ENCODE measurements at regions of chr10 and their contacts with region 1.

Region 1: GRCh38 chr10:71187600-71187999 is 24.8 kb upstream of the UNC5B start:
- DNase-seq: no peak

Region 2: GRCh38 chr10:70920565-70920964 is 267.0 kb before region 1 on chr10:
- intact Hi-C with region 1: loop called (anchors 5 kb)
- DNase-seq: no peak

Region 3: GRCh38 chr10:71128311-71128980 is 59.2 kb before region 1 on chr10:
- intact Hi-C with region 1: no loop called
- DNase-seq: no peak

Measured in cardiac septum (tissue), 1 donor.